ENCODE measurements at regions of chr9 and their contacts with region 1.

Region 1: GRCh38 chr9:109198736-109199379 is 31.8 kb upstream of the FRRS1L start:
- DNase-seq: peak; percentile 39 to 50 (median 43)
- ATAC-seq: peak; percentile 88
- H3K4me3 ChIP-seq: no peak overlapping the region
- H3K27ac ChIP-seq: no peak overlapping the region
- H3K4me1 ChIP-seq: no peaks in the 10 kb centered on the region
- H3K27me3 ChIP-seq: peaks cover 12 to 16% of the 10 kb centered on the region in 2 experiments
- CTCF ChIP-seq: peak; percentile 60 to 66 (median 61); a peak in 5 of 6 replicates
- EP300 ChIP-seq: no peak
- POLR2A ChIP-seq: no peak
- RAD21 ChIP-seq: peak in 1 of 2 experiments; percentile 62; a peak in 2 of 4 replicates

Region 2: GRCh38 chr9:108876425-108876824 is 322.4 kb before region 1 on chr9:
- CTCF ChIA-PET with region 1: no interaction called
- POLR2A ChIA-PET with region 1: no interaction called
- in situ Hi-C with region 1: no loop called
- intact Hi-C with region 1: no loop called
- DNase-seq: no peak
- ATAC-seq: no peak
- H3K4me3 ChIP-seq: no peak overlapping the region
- H3K27ac ChIP-seq: no peak overlapping the region
- H3K4me1 ChIP-seq: no peaks in the 10 kb centered on the region
- H3K27me3 ChIP-seq: no peaks in the 10 kb centered on the region
- CTCF ChIP-seq: no peak
- EP300 ChIP-seq: no peak
- POLR2A ChIP-seq: no peak
- RAD21 ChIP-seq: no peak

Region 3: GRCh38 chr9:108933718-108934322 is 265.0 kb before region 1 on chr9 and contains the start of gene ELP1:
- CTCF ChIA-PET with region 1: no interaction called
- POLR2A ChIA-PET with region 1: no interaction called
- in situ Hi-C with region 1: no loop called
- intact Hi-C with region 1: loop called (anchors 5 kb)
- DNase-seq: peak; percentile 90 to 97 (median 92)
- ATAC-seq: peak; percentile 95
- H3K4me3 ChIP-seq: peak within 1 kb of the TSS; percentile 86
- H3K27ac ChIP-seq: peak within 1 kb of the TSS; percentile 79
- H3K4me1 ChIP-seq: peaks cover 0 to 12% of the 10 kb centered on the region in 2 experiments; a peak in 4 of 5 replicates
- H3K27me3 ChIP-seq: no peaks in the 10 kb centered on the region
- CTCF ChIP-seq: peak; percentile 48 to 61 (median 57)
- EP300 ChIP-seq: 0 out of 2 replicates have a peak, but pooled peaks have one; percentile 19
- POLR2A ChIP-seq: peak; percentile 83
- RAD21 ChIP-seq: peak; percentile 37 to 45
- polyA plus RNA-seq, gene ELP1: 17.0 to 25.0 TPM

Region 4: GRCh38 chr9:109176386-109176785 is 22.5 kb before region 1 on chr9:
- CTCF ChIA-PET with region 1: no interaction called
- POLR2A ChIA-PET with region 1: no interaction called
- in situ Hi-C with region 1: no loop called
- intact Hi-C with region 1: no loop called
- DNase-seq: no peak
- ATAC-seq: no peak
- H3K4me3 ChIP-seq: no peak overlapping the region
- H3K27ac ChIP-seq: no peak overlapping the region
- H3K4me1 ChIP-seq: peaks cover 0 to 9% of the 10 kb centered on the region in 2 experiments; a peak in 1 of 5 replicates
- H3K27me3 ChIP-seq: no peaks in the 10 kb centered on the region
- CTCF ChIP-seq: no peak
- EP300 ChIP-seq: no peak
- POLR2A ChIP-seq: no peak
- RAD21 ChIP-seq: no peak

Region 5: GRCh38 chr9:109469646-109470358 is 270.9 kb after region 1 on chr9:
- CTCF ChIA-PET with region 1: no interaction called
- POLR2A ChIA-PET with region 1: no interaction called
- in situ Hi-C with region 1: no loop called
- intact Hi-C with region 1: loop called (anchors 5 kb)
- DNase-seq: peak; percentile 52 to 64 (median 56)
- ATAC-seq: peak; percentile 96
- H3K4me3 ChIP-seq: no peak overlapping the region
- H3K27ac ChIP-seq: no peak overlapping the region
- H3K4me1 ChIP-seq: no peaks in the 10 kb centered on the region
- H3K27me3 ChIP-seq: peaks cover 6 to 27% of the 10 kb centered on the region in 2 experiments; a peak in 4 of 5 replicates
- CTCF ChIP-seq: peak; percentile 74 to 87 (median 80)
- EP300 ChIP-seq: no peak
- POLR2A ChIP-seq: no peak
- RAD21 ChIP-seq: peak; percentile 67 to 78

Measured in K562 (cell line).